ENCODE measurements at regions of chr7 and their contacts with region 1.

Region 1: GRCh38 chr7:43569424-43569823 is 13.5 kb upstream of the STK17A start:
- DNase-seq: no peak
- ATAC-seq: no peak
- H3K4me3 ChIP-seq: no peak overlapping the region
- H3K27ac ChIP-seq: no peak overlapping the region
- H3K4me1 ChIP-seq: peaks cover 0 to 12% (median 0%) of the 10 kb centered on the region in 12 donors
- H3K27me3 ChIP-seq: no peaks in the 10 kb centered on the region
- CTCF ChIP-seq: no peak
- POLR2A ChIP-seq: no peak

Region 2: DNA sequence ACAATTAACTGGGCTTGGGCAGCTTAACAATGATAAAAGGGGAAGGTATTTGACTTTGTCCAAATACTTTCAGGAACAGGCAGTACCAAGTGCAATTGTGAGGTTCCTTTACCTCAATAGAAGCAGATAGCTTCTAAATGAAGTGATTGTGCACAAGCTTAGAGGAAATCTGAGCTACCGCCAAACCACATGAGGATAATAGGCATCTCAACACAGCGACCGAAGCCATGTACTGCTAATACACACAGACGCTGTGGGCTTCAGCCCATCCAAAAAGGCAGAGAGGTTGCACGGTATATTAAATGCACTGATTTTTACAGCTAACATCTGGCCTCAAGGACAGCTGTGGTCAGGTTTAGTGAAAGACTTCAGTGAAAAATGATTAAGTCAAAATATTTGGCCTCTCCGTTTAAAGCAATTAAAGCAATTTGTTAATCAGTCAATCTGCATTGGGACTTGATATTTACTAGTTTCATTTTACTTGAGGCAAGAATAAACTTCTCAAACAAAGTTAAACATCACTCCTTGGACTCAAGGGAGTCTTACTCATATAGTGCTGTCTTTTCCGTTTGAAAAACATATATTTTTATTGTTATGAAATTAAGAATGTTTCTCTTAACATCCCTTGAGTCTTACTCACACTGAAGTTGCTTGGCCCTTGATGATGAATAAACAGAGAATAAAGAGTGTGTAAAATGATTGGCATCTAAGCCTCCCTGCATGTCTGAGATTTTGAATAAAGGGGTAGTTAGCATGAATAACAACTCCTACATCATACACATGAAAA is 963.8 kb before region 1 on chr7:
- intact Hi-C with region 1: no loop called
- DNase-seq: no peak
- ATAC-seq: no peak
- H3K4me3 ChIP-seq: no peak overlapping the region
- H3K27ac ChIP-seq: peak overlapping the region in 1 of 12 donors; percentile 18
- H3K4me1 ChIP-seq: peaks cover 0 to 6% (median 0%) of the 10 kb centered on the region in 12 donors
- H3K27me3 ChIP-seq: no peaks in the 10 kb centered on the region
- CTCF ChIP-seq: no peak
- POLR2A ChIP-seq: no peak

Region 3: DNA sequence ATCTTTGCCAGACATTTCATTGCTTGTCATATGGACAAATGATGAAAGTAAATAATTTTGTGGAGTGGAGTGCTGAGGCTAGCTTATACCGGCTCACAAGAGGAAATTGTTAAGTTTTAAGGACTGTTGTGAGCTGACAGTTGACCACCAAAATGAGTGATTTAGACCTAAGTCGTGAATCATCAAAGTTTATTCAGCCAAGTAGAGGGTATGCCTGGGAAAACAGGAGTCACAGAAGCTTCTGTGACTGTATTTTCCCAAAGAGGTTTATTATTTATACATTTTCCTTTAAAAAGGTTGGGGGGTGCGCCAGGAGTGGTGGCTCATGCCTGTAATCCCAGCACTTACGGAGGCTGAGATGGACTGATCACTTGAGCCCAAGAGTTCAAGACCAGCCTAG is 278.1 kb after region 1 on chr7:
- intact Hi-C with region 1: loop called in 1 of 10 experiments (anchors 10 kb)
- DNase-seq: no peak
- ATAC-seq: no peak
- H3K4me3 ChIP-seq: no peak overlapping the region
- H3K27ac ChIP-seq: no peak overlapping the region
- H3K4me1 ChIP-seq: no peaks in the 10 kb centered on the region
- H3K27me3 ChIP-seq: peaks cover 0 to 10% (median 0%) of the 10 kb centered on the region in 9 donors
- CTCF ChIP-seq: no peak
- POLR2A ChIP-seq: no peak